CD4-positive, alpha-beta memory T cell (primary cell): ENCODE measurements at regions of chr1 and their contacts with region 1.

Region 1: DNA sequence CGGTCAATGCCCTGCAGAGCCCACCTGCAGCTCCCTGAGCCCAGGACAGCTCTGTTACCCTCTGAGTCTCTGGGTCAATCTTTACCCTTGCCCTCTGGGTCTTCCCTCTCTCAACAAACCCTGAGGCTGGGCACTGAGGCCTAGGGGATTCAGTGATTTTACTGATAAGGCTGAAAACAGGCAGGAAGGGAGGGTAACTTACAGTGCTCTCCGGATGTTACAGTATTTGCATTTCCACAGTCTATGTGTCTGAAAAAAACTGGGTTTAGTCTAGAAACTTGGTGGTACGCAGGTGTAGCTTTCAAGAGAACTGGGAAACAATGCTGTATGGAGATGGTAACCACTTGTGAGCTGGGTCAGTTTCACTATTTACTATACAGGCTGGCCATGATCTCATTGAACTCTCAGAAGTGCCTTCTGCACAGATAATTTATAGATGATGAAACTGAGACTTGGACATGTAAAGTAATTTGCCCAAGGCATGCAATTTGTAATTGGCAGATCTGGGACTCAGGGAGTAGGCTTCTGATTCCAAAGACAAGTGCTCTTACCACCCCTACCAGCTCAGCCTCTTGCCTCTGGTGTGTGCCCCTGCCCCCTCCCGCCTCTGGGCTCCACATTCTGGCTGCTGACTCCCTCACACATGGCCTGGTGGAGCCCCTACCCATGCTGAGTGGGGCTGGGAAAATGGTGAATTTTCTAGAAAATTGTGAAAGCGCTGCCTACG is 48.8 kb downstream of the TENT5C start:
- DNase-seq: peak in 4 of 5 donors; percentile 31 to 44 (median 37)
- H3K4me3 ChIP-seq: peak overlapping the region; percentile 8 to 20
- H3K4me3 Mint-ChIP-seq: peak overlapping the region; percentile 52 to 88 (median 76)
- H3K27ac ChIP-seq: peak overlapping the region; percentile 9
- H3K27ac Mint-ChIP-seq: peak overlapping the region; percentile 81 to 99 (median 94)
- H3K4me1 ChIP-seq: peaks cover 95% of the 10 kb centered on the region
- H3K4me1 Mint-ChIP-seq: peaks cover 75 to 92% (median 86%) of the 10 kb centered on the region in 4 donors
- H3K27me3 ChIP-seq: no peaks in the 10 kb centered on the region
- H3K27me3 Mint-ChIP-seq: no peaks in the 10 kb centered on the region

Region 2: DNA sequence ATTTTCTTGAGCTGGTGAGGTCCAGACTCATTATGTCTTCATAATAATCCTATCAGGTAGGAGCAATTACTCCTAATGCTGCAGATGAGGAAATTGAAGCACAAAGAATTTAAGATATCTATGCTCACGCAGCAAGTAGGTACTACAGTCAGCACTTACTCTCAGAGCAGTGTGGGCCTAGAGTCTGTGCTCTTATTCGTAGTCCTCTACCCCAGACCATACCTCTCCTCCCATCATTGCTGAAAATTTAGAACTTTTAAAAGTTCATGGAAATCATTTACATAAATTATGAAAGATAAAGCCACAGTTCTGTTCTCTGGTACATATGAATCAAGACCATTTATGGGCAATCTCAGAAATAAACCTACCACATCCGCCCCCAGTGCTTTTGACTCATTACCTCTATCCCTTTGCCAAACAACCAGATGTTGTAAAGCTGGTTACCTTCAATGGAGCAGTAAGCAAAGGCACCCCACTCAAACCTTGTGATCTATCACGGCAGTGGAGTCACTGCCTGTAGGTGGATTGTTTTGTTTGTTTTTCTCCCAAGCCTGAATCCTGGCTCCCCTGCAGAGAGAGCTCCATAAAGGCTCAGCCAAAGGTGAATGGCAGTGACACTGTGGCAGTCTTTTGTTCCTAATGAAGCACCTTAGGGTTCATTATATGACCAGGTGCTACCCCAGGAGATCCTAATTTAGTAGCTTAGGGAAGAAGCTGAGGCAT is 308.3 kb before region 1 on chr1:
- CTCF ChIA-PET with region 1: no interaction called
- POLR2A ChIA-PET with region 1: no interaction called
- intact Hi-C with region 1: no loop called
- DNase-seq: peak in 1 of 5 donors; percentile 13
- H3K4me3 ChIP-seq: no peak overlapping the region
- H3K4me3 Mint-ChIP-seq: peak overlapping the region in 3 of 8 donors; percentile 7 to 35 (median 21)
- H3K27ac ChIP-seq: no peak overlapping the region
- H3K27ac Mint-ChIP-seq: peak overlapping the region in 4 of 7 donors; percentile 3 to 53 (median 8)
- H3K4me1 ChIP-seq: peaks cover 15% of the 10 kb centered on the region
- H3K4me1 Mint-ChIP-seq: peaks cover 10 to 24% (median 19%) of the 10 kb centered on the region in 4 donors
- H3K27me3 ChIP-seq: no peaks in the 10 kb centered on the region
- H3K27me3 Mint-ChIP-seq: peaks cover 2 to 5% of the 10 kb centered on the region in 2 donors

Region 3: GRCh38 chr1:117612517-117613248 is 42.0 kb before region 1 on chr1:
- CTCF ChIA-PET with region 1: interaction called, 77 read pairs
- POLR2A ChIA-PET with region 1: interaction called, 493 read pairs
- intact Hi-C with region 1: loop called (anchors 1 kb)
- DNase-seq: no peak
- H3K4me3 ChIP-seq: no peak overlapping the region
- H3K4me3 Mint-ChIP-seq: peak overlapping the region in 5 of 8 donors; percentile 5 to 77 (median 56)
- H3K27ac ChIP-seq: no peak overlapping the region
- H3K27ac Mint-ChIP-seq: peak overlapping the region in 5 of 7 donors; percentile 26 to 75 (median 53)
- H3K4me1 ChIP-seq: peaks cover 99% of the 10 kb centered on the region
- H3K4me1 Mint-ChIP-seq: peaks cover 73 to 99% (median 86%) of the 10 kb centered on the region in 4 donors
- H3K27me3 ChIP-seq: no peaks in the 10 kb centered on the region
- H3K27me3 Mint-ChIP-seq: no peaks in the 10 kb centered on the region

Region 4: DNA sequence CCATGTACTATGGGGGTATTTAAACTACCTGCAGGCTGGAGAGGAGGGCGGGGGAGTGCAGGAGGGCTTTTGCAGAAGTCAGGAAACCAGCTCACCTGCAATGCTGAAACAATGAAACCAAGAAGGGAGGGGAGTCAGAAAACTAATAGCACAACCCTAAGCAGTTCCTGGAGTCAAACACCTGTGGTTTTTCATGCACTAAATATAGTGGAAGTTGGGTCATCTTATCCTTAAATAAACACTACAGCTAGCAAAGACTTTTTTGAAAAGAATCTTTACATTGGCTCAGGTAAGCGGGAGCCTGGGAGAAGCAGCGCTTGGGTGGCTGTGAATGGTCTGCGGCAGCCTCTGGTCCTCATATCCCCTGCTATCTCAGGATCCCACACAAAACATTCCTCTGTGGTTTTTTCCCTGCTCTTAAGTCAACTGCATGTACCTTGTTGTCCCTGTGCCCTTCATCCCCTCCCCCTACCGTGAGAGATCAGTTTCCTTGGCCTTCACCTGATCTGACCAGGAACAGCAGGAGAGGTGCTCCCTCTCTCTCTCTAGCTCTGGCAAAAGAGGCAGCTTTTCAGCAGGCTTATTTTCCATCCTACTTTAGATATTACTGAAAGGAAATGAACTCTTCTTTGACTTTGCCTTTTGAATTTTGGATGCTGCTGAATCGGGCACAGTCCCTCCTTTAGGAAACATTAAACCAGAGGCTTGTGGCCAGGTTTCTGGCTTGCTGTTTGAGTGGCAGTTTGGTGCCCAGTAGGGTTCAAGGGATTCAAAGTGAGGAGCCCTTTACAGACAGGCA is 22.2 kb before region 1 on chr1:
- CTCF ChIA-PET with region 1: interaction called, 4 read pairs
- POLR2A ChIA-PET with region 1: interaction called, 23 read pairs
- intact Hi-C with region 1: no loop called
- DNase-seq: no peak
- H3K4me3 ChIP-seq: no peak overlapping the region
- H3K4me3 Mint-ChIP-seq: peak overlapping the region in 2 of 8 donors; percentile 10 to 49
- H3K27ac ChIP-seq: no peak overlapping the region
- H3K27ac Mint-ChIP-seq: peak overlapping the region in 2 of 7 donors; percentile 7 to 76
- H3K4me1 ChIP-seq: peaks cover 40% of the 10 kb centered on the region
- H3K4me1 Mint-ChIP-seq: peaks cover 21 to 69% (median 47%) of the 10 kb centered on the region in 4 donors
- H3K27me3 ChIP-seq: no peaks in the 10 kb centered on the region
- H3K27me3 Mint-ChIP-seq: no peaks in the 10 kb centered on the region

Region 5: DNA sequence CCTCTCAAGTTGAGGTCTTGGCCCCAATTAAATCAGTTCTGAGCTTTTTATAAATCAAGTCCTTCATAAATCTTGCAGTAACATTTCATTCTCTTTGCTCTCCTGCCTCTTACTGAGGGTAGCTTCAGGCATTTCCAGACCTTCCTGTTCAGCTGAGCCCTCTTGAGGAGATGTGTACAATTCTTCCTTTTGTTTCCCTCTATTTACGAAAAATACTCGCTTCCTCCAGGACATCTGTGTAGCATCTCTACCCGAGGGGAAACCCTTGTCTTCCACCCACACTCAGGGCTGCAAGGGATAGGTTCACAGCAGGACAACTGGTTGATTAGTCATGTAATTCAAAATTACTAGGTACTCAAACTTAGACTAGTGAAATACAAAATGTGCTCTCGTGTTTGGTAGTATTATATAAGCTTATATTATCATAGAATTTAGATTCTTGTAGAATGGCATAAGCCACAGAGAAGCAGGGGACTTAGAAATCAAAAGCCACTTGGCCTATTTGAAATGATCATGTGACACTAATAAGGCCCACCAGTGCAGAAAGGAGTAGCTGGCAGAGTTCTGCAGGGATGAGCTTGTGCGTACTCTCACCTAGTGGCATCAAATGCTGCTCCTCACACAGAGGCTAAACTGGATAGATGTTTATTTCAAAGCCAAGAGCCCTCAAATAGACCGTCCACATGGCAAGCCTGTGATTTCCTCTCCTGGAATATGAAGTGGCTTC is 148.0 kb after region 1 on chr1:
- CTCF ChIA-PET with region 1: no interaction called
- POLR2A ChIA-PET with region 1: no interaction called
- intact Hi-C with region 1: no loop called
- DNase-seq: no peak
- H3K4me3 ChIP-seq: no peak overlapping the region
- H3K4me3 Mint-ChIP-seq: no peak overlapping the region
- H3K27ac ChIP-seq: no peak overlapping the region
- H3K27ac Mint-ChIP-seq: no peak overlapping the region
- H3K4me1 ChIP-seq: no peaks in the 10 kb centered on the region
- H3K4me1 Mint-ChIP-seq: no peaks in the 10 kb centered on the region
- H3K27me3 ChIP-seq: no peaks in the 10 kb centered on the region
- H3K27me3 Mint-ChIP-seq: peaks cover 21 to 23% of the 10 kb centered on the region in 2 donors